ENCODE measurements at regions of chr1 and their contacts with region 1.

Region 1: GRCh38 chr1:147515046-147515869 is 26.0 kb upstream of the BCL9 start:
- DNase-seq: peak; percentile 73
- H3K4me3 Mint-ChIP-seq: no peak overlapping the region
- H3K27ac Mint-ChIP-seq: peak overlapping the region; percentile 4
- H3K4me1 Mint-ChIP-seq: peaks cover 23% of the 10 kb centered on the region
- H3K27me3 Mint-ChIP-seq: no peaks in the 10 kb centered on the region
- CTCF ChIP-seq: peak; percentile 25

Region 2: GRCh38 chr1:147541672-147542568 is 26.7 kb after region 1 on chr1:
- CTCF ChIA-PET with region 1: interaction called, 5 read pairs
- intact Hi-C with region 1: loop called (anchors 2 kb)
- DNase-seq: peak; percentile 45
- H3K4me3 Mint-ChIP-seq: no peak overlapping the region
- H3K27ac Mint-ChIP-seq: no peak overlapping the region
- H3K4me1 Mint-ChIP-seq: peaks cover 41% of the 10 kb centered on the region
- H3K27me3 Mint-ChIP-seq: no peaks in the 10 kb centered on the region
- CTCF ChIP-seq: no peak

Region 3: GRCh38 chr1:147599362-147600118 is 84.3 kb after region 1 on chr1:
- CTCF ChIA-PET with region 1: interaction called, 10 read pairs
- intact Hi-C with region 1: loop called (anchors 1 kb)
- DNase-seq: peak; percentile 98
- H3K4me3 Mint-ChIP-seq: peak overlapping the region; percentile 92
- H3K27ac Mint-ChIP-seq: peak overlapping the region; percentile 50
- H3K4me1 Mint-ChIP-seq: peaks cover 24% of the 10 kb centered on the region
- H3K27me3 Mint-ChIP-seq: no peaks in the 10 kb centered on the region
- CTCF ChIP-seq: no peak

Region 4: GRCh38 chr1:147627435-147628110 is 112.3 kb after region 1 on chr1:
- CTCF ChIA-PET with region 1: interaction called, 7 read pairs
- intact Hi-C with region 1: loop called (anchors 1 kb)
- DNase-seq: peak; percentile 74
- H3K4me3 Mint-ChIP-seq: no peak overlapping the region
- H3K27ac Mint-ChIP-seq: no peak overlapping the region
- H3K4me1 Mint-ChIP-seq: no peaks in the 10 kb centered on the region
- H3K27me3 Mint-ChIP-seq: no peaks in the 10 kb centered on the region
- CTCF ChIP-seq: peak; percentile 94

Region 5: DNA sequence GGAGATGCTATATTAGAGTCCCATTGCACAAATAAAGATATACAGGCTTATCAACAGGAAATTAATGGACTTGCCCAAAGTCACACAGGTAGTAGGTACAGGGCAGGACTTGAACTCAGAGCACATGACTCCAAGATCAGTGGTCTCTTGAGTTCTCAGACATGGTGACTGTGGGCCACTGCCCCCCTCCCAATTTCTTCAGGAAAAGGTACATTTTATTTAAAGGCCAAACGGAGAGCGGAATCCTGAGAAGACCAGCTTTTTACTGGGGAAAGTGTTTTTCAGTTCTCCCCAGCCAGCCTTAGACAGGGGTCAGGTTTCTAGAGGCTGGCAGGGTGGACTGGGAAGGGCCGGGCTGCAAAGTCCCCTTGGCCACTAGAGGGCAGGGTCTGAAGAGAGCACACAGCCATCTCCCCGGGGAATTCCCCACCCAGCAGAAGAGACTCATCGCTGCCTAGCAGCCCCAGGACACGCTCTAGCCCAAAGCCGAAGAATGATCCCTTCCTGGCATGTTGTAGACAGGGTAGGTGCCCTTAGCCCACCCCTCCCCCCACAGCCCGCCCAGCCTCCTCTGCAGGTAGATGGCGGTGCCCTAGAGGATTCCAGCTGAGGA is 125.4 kb after region 1 on chr1:
- CTCF ChIA-PET with region 1: interaction called, 5 read pairs
- intact Hi-C with region 1: loop called (anchors 5 kb)
- DNase-seq: peak; percentile 93
- H3K4me3 Mint-ChIP-seq: no peak overlapping the region
- H3K27ac Mint-ChIP-seq: no peak overlapping the region
- H3K4me1 Mint-ChIP-seq: peaks cover 20% of the 10 kb centered on the region
- H3K27me3 Mint-ChIP-seq: no peaks in the 10 kb centered on the region
- CTCF ChIP-seq: peak; percentile 95